ENCODE measurements at regions of chr12 and their contacts with region 1.

Region 1: GRCh38 chr12:95582230-95583058 is 31.2 kb upstream of the USP44 start:
- DNase-seq: no peak
- H3K4me3 ChIP-seq: no peak overlapping the region
- CTCF ChIP-seq: peak; percentile 48

Region 2: GRCh38 chr12:95593266-95593871 is 10.9 kb after region 1 on chr12:
- CTCF ChIA-PET with region 1: interaction called, 19 read pairs
- POLR2A ChIA-PET with region 1: no interaction called
- DNase-seq: no peak
- H3K4me3 ChIP-seq: no peak overlapping the region
- CTCF ChIP-seq: no peak

Region 3: GRCh38 chr12:95805864-95806671 is 223.6 kb after region 1 on chr12:
- CTCF ChIA-PET with region 1: interaction called, 55 read pairs
- POLR2A ChIA-PET with region 1: no interaction called
- DNase-seq: peak; percentile 99
- H3K4me3 ChIP-seq: no peak overlapping the region
- CTCF ChIP-seq: no peak

Region 4: GRCh38 chr12:95848575-95849388 is 266.3 kb after region 1 on chr12:
- CTCF ChIA-PET with region 1: interaction called, 30 read pairs
- POLR2A ChIA-PET with region 1: no interaction called
- DNase-seq: no peak
- H3K4me3 ChIP-seq: no peak overlapping the region
- CTCF ChIP-seq: peak; percentile 13

Measured in AG04449 (cell line).